Right ventricle myocardium inferior (tissue), 1 donor: ENCODE measurements at regions of chr7 and their contacts with region 1.

Region 1: GRCh38 chr7:118153551-118154177 is 30.3 kb upstream of the LSM8 start:
- DNase-seq: no peak
- ATAC-seq: no peak

Region 2: DNA sequence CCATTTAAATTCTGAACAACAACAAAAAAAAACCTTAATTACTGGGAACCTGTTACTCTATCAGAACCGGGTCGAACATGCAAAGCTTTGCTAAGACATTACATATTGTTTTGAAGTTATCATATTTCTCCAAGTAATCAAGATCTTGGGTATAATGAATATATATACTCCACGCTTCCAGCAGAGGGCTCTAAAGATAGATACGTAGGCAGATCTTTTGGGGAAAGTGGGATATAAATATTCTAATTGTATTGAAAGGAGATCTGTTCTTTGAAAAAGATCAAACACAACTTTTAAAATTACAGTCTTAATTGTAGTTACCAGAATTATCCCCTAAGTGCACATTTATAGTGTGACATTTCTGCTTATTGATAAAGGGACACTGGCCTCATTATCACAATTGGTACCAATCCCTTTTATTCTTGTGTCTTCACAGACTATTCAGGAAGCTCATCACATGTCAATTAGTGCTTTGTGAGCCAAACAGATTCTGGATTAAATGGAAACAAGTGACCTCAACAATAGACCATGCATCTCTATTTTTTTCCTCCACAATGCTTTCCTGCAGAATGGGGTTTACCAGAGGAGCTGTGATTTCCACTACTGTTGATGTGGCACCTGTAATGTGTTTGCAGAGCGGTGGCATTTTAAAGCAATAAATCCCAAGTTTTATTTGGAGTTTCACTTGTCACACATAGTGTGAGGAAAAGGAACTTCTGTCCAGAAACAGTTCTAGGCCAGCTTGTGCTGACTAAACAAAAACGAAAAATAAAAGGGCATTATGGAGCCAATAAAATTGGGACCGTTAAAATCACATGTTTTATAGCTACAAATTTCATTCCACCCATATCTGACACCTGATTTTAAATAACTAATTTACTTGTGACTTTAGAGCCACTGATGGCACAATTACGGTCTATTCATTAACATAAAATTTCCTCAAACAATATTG is 402.8 kb before region 1 on chr7:
- intact Hi-C with region 1: loop called (anchors 5 kb)
- DNase-seq: no peak
- ATAC-seq: no peak

Region 3: GRCh38 chr7:117827862-117828261 is 325.8 kb before region 1 on chr7:
- intact Hi-C with region 1: no loop called
- DNase-seq: no peak
- ATAC-seq: no peak